ENCODE measurements at regions of chr2 and their contacts with region 1.

Region 1: GRCh38 chr2:16756831-16757644 is 91.4 kb upstream of the CYRIA start:
- DNase-seq: peak; percentile 30 to 72 (median 44)
- ATAC-seq: peak; percentile 88
- H3K4me3 ChIP-seq: no peak overlapping the region
- H3K4me3 Mint-ChIP-seq: no peak overlapping the region
- H3K27ac ChIP-seq: no peak overlapping the region
- H3K27ac Mint-ChIP-seq: no peak overlapping the region
- H3K4me1 ChIP-seq: no peaks in the 10 kb centered on the region
- H3K4me1 Mint-ChIP-seq: no peaks in the 10 kb centered on the region
- H3K27me3 ChIP-seq: no peaks in the 10 kb centered on the region
- H3K27me3 Mint-ChIP-seq: peaks cover 0 to 17% (median 7%) of the 10 kb centered on the region in 5 donors

Region 2: DNA sequence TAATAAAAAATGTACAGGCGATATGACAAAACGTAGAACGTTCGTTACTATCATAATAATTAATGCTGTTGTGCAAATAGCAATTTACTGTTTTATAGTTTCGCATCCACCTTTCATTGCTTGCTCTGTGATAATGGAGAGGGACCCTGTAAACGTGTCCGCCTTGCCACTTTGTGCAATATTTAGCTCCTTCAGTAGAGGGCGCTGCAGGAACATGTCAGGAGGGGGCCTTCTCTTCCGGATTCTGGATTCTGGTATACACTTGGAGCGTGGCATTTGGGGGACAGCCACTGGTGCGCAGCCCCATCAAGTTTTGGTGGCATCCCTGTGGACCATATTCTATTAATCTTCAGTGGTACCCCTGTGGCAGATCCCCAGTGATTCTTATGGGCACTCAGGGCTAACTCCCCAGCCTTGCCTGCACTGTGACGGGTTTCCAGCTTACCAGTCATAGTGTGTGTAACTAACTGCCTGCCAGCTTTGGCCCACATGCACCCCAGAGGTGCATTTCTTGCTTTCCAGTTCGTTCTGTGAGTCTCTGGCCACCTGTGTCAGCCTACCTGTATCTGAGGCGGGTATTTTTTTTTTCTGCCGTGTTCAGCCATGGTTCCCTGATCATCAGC is 231.7 kb before region 1 on chr2:
- CTCF ChIA-PET with region 1: no interaction called
- POLR2A ChIA-PET with region 1: no interaction called
- intact Hi-C with region 1: loop called in 1 of 2 experiments (anchors 1 kb)
- DNase-seq: peak in 1 of 9 donors; percentile 26
- ATAC-seq: peak; percentile 40
- H3K4me3 ChIP-seq: no peak overlapping the region
- H3K4me3 Mint-ChIP-seq: no peak overlapping the region
- H3K27ac ChIP-seq: no peak overlapping the region
- H3K27ac Mint-ChIP-seq: no peak overlapping the region
- H3K4me1 ChIP-seq: no peaks in the 10 kb centered on the region
- H3K4me1 Mint-ChIP-seq: peaks cover 0 to 2% (median 0%) of the 10 kb centered on the region in 7 donors
- H3K27me3 ChIP-seq: no peaks in the 10 kb centered on the region
- H3K27me3 Mint-ChIP-seq: peaks cover 4 to 23% (median 15%) of the 10 kb centered on the region in 5 donors

Region 3: GRCh38 chr2:16553226-16553625 is 203.8 kb before region 1 on chr2:
- CTCF ChIA-PET with region 1: no interaction called
- POLR2A ChIA-PET with region 1: no interaction called
- intact Hi-C with region 1: loop called (anchors 1 kb)
- DNase-seq: peak in 6 of 9 donors; percentile 2 to 33 (median 17)
- ATAC-seq: no peak
- H3K4me3 ChIP-seq: no peak overlapping the region
- H3K4me3 Mint-ChIP-seq: no peak overlapping the region
- H3K27ac ChIP-seq: no peak overlapping the region
- H3K27ac Mint-ChIP-seq: no peak overlapping the region
- H3K4me1 ChIP-seq: no peaks in the 10 kb centered on the region
- H3K4me1 Mint-ChIP-seq: no peaks in the 10 kb centered on the region
- H3K27me3 ChIP-seq: no peaks in the 10 kb centered on the region
- H3K27me3 Mint-ChIP-seq: peaks cover 0 to 24% (median 7%) of the 10 kb centered on the region in 5 donors

Region 4: DNA sequence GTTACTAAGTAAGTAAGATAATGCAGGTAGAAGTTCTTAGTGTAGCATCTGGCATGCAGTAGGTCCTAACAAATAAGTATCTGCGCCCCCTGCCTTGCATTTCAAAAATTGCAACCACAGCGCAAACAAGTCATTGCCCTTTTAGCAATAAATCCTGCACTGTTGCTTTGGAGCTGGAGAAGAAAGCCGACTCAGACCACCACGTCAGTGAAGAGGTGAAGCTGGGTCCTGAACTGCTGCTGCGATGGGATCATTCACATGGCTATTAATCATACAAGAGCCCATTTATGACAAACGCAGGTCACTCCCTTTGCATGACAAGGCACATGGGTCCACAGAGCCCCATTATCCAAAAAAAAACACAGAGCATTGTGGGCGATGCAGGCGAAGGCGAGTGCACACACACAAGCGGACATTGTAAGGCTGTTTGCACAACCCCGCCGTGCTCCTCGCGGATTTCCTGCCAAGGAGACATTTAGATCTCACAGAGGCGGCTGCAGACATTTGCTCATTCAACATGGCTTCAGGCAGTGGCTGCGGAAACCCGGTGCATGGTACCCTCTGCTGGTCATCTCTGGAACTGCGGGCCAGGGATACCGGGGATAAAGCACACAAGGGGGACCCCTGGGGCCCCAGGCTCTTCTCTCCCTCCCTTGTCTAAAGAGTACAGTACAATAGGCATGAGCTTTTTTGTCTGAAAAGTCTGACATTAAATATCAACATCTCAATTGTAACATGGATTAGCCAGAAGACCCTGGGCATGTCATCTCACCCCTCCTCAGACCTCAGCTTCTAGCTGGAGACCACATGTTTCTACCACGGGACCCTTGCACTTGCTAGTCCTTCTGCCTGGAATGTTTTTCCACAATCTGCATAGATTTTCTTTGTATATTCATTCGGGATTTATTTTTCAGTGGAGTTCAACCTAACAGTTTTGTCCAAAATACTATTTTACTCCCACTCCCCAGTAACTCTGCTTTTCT is 148.1 kb before region 1 on chr2:
- CTCF ChIA-PET with region 1: interaction called, 32 read pairs
- POLR2A ChIA-PET with region 1: no interaction called
- intact Hi-C with region 1: loop called (anchors 1 kb)
- DNase-seq: peak; percentile 72 to 91 (median 84)
- ATAC-seq: peak; percentile 94
- H3K4me3 ChIP-seq: peak overlapping the region; percentile 78
- H3K4me3 Mint-ChIP-seq: peak overlapping the region; percentile 79 to 97 (median 90)
- H3K27ac ChIP-seq: peak overlapping the region; percentile 36
- H3K27ac Mint-ChIP-seq: peak overlapping the region; percentile 41 to 90 (median 78)
- H3K4me1 ChIP-seq: no peaks in the 10 kb centered on the region
- H3K4me1 Mint-ChIP-seq: peaks cover 0 to 4% (median 0%) of the 10 kb centered on the region in 7 donors
- H3K27me3 ChIP-seq: no peaks in the 10 kb centered on the region
- H3K27me3 Mint-ChIP-seq: peaks cover under 1 to 6% (median under 1%) of the 10 kb centered on the region in 5 donors